ENCODE measurements at regions of chr10 and their contacts with region 1.

Region 1: GRCh38 chr10:97736902-97737769 is at the start of gene ZFYVE27:
- DNase-seq: peak; percentile 99
- H3K4me3 ChIP-seq: peak within 1 kb of the TSS; percentile 89 to 94
- H3K27ac ChIP-seq: peak within 1 kb of the TSS; percentile 74 to 84
- H3K4me1 ChIP-seq: peaks cover 0 to 15% of the 10 kb centered on the region in 2 experiments; a peak in 2 of 4 replicates
- H3K27me3 ChIP-seq: no peaks in the 10 kb centered on the region
- CTCF ChIP-seq: no peak
- EP300 ChIP-seq: 0 out of 4 replicates have a peak, but pooled peaks of 1 of the 2 experiments have one; percentile 30
- RAD21 ChIP-seq: no peak
- polyA plus RNA-seq, gene ZFYVE27: 30.5 and 44.3 TPM in 2 replicates

Region 2: DNA sequence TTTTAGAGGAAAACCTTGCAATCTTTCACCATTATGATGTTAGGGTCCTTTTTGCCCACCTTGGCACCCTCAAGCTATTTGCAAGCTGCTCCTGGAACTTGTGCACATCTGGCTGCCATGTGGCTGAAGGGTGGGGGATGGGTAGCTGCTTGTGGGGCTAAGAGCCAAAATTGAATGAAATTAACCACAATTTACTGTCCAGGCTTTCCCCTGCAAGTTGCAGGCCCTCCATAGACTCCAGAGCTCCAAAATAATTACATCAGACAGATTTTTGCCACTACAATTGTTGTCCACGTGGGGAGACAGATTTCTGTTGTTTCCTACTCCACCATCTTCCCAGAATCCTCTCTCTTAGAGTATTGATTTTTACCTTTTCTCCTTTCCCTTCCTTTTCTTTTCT is 77.5 kb before region 1 on chr10:
- CTCF ChIA-PET with region 1: no interaction called
- POLR2A ChIA-PET with region 1: no interaction called
- DNase-seq: peak; percentile 78
- H3K4me3 ChIP-seq: no peak overlapping the region
- H3K27ac ChIP-seq: peak overlapping the region; percentile 37 to 81; a peak in 3 of 4 replicates
- H3K4me1 ChIP-seq: peaks cover 0 to 8% of the 10 kb centered on the region in 2 experiments; a peak in 2 of 4 replicates
- H3K27me3 ChIP-seq: no peaks in the 10 kb centered on the region
- CTCF ChIP-seq: no peak
- EP300 ChIP-seq: peak; percentile 44 to 93; a peak in 3 of 4 replicates
- RAD21 ChIP-seq: peak; percentile 18; the same call in 1 of the 2 replicates

Region 3: DNA sequence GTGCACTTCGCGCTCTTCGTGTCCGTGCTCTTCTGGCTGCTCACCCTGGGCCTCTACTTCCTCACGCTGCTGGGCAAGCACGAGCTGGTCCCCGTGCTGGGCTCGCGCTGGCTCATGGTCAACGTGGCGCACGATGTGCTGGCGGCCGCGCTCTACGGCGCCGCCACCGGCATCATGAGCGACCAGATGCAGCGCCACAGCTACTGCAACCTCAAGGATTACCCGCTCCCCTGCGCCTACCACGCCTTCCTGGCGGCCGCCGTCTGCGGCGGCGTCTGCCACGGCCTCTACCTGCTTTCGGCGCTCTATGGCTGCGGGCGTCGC is 23.1 kb before region 1 on chr10:
- CTCF ChIA-PET with region 1: interaction called, 687 read pairs
- POLR2A ChIA-PET with region 1: interaction called, 4 read pairs
- DNase-seq: no peak
- H3K4me3 ChIP-seq: peak overlapping the region; percentile 64 to 71
- H3K27ac ChIP-seq: peak overlapping the region; percentile 64 to 84
- H3K4me1 ChIP-seq: peaks cover 19 to 27% of the 10 kb centered on the region in 2 experiments; a peak in 3 of 4 replicates
- H3K27me3 ChIP-seq: no peaks in the 10 kb centered on the region
- CTCF ChIP-seq: peak; percentile 29; the same call in 1 of the 2 replicates
- EP300 ChIP-seq: no peak
- RAD21 ChIP-seq: no peak